Stomach (tissue), 19 donors: ENCODE measurements at regions of chr21 and their contacts with region 1.

Region 1: DNA sequence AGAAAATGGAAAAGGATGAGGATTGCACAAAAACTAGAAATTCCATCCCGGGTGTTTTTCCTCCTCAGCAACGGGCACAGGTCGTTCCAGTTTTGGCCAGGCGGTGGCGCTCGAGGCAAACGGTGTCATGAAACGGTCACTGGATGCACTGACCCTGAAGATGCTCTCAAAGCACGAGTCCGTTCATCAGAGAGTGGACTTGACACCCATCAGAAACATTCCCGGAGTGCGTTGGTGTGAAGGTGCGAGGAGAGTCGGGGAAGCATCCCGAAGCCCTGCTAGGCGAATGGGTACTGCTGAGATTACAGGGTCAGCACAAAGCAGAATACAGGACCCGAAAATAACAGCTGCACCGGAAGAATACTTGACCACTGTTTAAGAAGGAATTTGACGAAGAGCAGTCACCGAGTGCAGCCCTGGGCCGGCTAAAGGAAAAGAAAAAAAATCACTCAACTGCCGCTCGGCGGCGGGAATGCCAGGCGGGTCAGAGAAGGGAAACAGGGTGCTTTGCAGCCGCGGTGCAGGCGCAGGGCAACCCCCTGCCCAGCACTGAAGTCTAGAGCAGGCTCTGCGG is 71.7 kb upstream of the ETS2 start:
- DNase-seq: peak; percentile 89 to 91
- H3K4me3 ChIP-seq: peak overlapping the region; percentile 22 to 36 (median 28)
- H3K27ac ChIP-seq: peak overlapping the region; percentile 16 to 76 (median 74)
- H3K4me1 ChIP-seq: peaks cover 0 to 12% (median 3%) of the 10 kb centered on the region in 4 donors
- H3K27me3 ChIP-seq: peaks cover 0 to 11% (median 7%) of the 10 kb centered on the region in 3 donors
- CTCF ChIP-seq: peak in 6 of 7 experiments; percentile 62 to 95 (median 92)
- EP300 ChIP-seq: no peak
- POLR2A ChIP-seq: no peak

Region 2: DNA sequence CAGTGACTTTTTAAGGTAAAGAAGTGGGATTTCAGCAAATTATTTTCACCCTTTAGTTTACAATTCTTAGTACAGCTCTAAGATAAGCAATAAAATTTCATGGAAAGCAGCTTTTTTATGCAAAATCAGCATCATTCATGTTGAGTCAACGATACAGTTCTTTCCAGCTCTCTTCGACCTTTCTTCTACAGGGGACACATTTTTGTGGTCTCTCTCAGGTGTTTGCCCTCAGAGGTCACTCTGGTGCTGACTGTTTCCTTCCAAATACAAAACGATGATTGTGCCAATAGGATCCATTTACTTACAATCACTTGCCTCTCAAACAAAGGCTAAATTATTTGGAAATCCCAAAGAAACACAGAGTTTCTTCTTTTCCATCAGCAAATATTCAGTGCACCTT is 398.2 kb after region 1 on chr21:
- intact Hi-C with region 1: loop called (anchors 5 kb)
- DNase-seq: no peak
- H3K4me3 ChIP-seq: no peak overlapping the region
- H3K27ac ChIP-seq: no peak overlapping the region
- H3K4me1 ChIP-seq: no peaks in the 10 kb centered on the region
- H3K27me3 ChIP-seq: no peaks in the 10 kb centered on the region
- CTCF ChIP-seq: no peak
- EP300 ChIP-seq: no peak
- POLR2A ChIP-seq: no peak